HEK293T (cell line): ENCODE measurements at regions of chrX and their contacts with region 1.

Region 1: GRCh38 chrX:155231163-155231562 is 14.9 kb downstream of the VBP1 start:
- DNase-seq: no peak

Region 2: DNA sequence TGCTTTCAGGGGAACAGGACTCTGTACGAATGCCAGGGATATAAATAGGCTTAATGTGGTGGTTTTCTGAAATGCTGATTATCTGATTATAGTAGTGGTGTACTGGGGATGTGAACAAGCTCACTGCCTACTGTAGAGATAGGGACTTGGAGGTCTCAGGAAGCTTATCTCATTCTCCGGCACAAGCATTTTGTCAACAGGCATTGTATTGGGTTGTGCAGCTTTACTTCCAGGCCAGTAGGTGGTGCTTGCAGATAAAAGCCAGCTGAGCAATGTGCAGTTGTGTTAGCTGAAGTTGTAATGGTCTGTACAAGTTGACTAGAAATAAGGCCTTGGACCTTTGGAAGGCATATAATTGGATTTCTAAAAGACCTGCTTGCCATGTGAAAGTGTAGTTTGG is 431.1 kb after region 1 on chrX:
- CTCF ChIA-PET with region 1: interaction called, 10 read pairs
- POLR2A ChIA-PET with region 1: no interaction called
- DNase-seq: peak; percentile 11